Activated CD4-positive, alpha-beta T cell treated with anti-CD3 and anti-CD28 coated beads for 36 hours (primary cell): ENCODE measurements at regions of chr7 and their contacts with region 1.

Region 1: GRCh38 chr7:114021136-114021847 is 102.5 kb upstream of the PPP1R3A start:
- DNase-seq: no peak
- ATAC-seq: no peak
- H3K4me3 Mint-ChIP-seq: no peak overlapping the region
- H3K27ac Mint-ChIP-seq: no peak overlapping the region
- H3K4me1 Mint-ChIP-seq: no peaks in the 10 kb centered on the region
- H3K27me3 Mint-ChIP-seq: peaks cover 2% of the 10 kb centered on the region

Region 2: DNA sequence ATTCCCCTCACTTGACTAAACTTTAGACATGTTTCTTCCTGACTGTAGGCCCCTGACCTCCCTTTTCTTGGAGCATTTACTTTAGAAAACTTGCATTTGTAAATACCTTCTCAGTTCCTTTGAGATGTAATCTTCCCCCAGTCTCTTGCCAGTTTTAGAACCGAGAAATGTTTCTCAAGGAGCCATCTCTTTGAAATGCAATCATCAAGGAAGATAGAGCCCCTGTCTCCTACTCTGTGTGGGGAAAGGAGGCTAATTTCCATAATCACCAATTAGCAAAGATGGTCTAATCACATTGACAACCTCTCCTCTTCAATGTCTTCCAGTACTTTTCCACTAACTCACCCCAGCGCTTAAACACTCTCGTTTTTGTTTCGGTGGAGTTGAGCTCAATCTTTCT is 832.9 kb before region 1 on chr7:
- CTCF ChIA-PET with region 1: no interaction called
- POLR2A ChIA-PET with region 1: no interaction called
- intact Hi-C with region 1: no loop called
- DNase-seq: no peak
- ATAC-seq: no peak
- H3K4me3 Mint-ChIP-seq: no peak overlapping the region
- H3K27ac Mint-ChIP-seq: no peak overlapping the region
- H3K4me1 Mint-ChIP-seq: no peaks in the 10 kb centered on the region
- H3K27me3 Mint-ChIP-seq: peaks cover 9% of the 10 kb centered on the region

Region 3: DNA sequence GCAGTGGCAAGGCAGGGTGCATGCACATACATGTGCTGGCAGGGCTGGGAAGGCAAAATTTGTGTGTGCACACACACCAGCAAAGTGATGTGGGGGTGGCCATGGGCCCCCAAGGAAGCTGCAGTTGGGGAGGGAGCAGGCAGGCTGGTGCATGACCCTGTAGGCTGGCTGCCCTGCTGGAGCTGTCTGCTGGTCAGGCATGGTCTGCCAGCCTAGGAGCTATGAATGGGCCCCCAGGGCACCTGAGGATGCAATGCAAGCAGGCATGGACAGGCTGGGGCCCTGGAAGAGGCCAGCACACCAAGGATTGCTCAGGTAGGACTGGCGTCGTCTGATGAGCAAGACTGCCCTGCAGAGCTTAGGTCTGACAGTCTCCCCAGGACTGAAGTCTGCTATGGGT is 84.3 kb before region 1 on chr7:
- CTCF ChIA-PET with region 1: no interaction called
- POLR2A ChIA-PET with region 1: no interaction called
- intact Hi-C with region 1: no loop called
- DNase-seq: no peak
- ATAC-seq: no peak
- H3K4me3 Mint-ChIP-seq: no peak overlapping the region
- H3K27ac Mint-ChIP-seq: no peak overlapping the region
- H3K4me1 Mint-ChIP-seq: no peaks in the 10 kb centered on the region
- H3K27me3 Mint-ChIP-seq: no peaks in the 10 kb centered on the region

Region 4: DNA sequence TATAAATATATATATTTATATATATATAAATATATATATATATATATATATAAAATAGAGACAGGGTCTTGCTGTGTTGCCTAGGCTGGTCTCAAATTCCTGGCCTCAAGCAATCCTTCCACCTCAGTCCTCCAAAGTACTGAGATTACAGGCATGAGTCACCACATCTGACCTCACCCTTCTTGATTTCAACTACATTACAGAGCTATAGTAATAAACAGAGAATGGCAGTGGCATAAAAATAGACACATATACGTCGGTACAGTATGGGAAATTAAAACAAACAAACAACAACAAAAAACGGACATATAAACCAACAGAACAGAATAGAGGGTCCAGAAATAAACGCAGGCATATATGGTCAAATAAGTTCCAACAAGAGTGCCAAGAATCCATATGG is 24.9 kb before region 1 on chr7:
- CTCF ChIA-PET with region 1: no interaction called
- POLR2A ChIA-PET with region 1: no interaction called
- intact Hi-C with region 1: no loop called
- DNase-seq: no peak
- ATAC-seq: no peak
- H3K4me3 Mint-ChIP-seq: no peak overlapping the region
- H3K27ac Mint-ChIP-seq: no peak overlapping the region
- H3K4me1 Mint-ChIP-seq: no peaks in the 10 kb centered on the region
- H3K27me3 Mint-ChIP-seq: no peaks in the 10 kb centered on the region

Region 5: DNA sequence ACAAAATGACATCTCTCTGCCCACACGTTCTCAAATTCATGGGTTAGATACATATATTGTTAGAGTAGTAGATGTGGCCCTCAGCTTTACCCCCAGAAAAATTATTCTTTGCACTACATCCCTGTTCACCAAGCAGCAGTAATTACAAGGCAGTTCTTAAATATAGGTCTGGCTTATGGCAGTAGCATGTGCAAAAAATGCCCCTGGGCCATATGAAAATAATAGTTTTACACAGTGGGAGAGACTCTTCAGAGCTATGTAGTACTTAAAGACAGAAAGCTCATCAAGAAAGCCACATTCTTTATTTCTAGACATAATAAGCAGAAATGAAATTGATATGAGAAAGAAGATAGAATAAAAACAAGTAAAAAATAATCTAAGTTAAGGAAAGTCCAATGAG is 197.0 kb after region 1 on chr7:
- CTCF ChIA-PET with region 1: no interaction called
- POLR2A ChIA-PET with region 1: no interaction called
- intact Hi-C with region 1: no loop called
- DNase-seq: no peak
- ATAC-seq: no peak
- H3K4me3 Mint-ChIP-seq: no peak overlapping the region
- H3K27ac Mint-ChIP-seq: no peak overlapping the region
- H3K4me1 Mint-ChIP-seq: no peaks in the 10 kb centered on the region
- H3K27me3 Mint-ChIP-seq: no peaks in the 10 kb centered on the region

Region 6: GRCh38 chr7:115851291-115851690 is 1830.0 kb after region 1 on chr7:
- CTCF ChIA-PET with region 1: interaction called, 3 read pairs
- POLR2A ChIA-PET with region 1: no interaction called
- intact Hi-C with region 1: loop called in 1 of 2 experiments (anchors 5 kb)
- DNase-seq: no peak
- ATAC-seq: no peak
- H3K4me3 Mint-ChIP-seq: no peak overlapping the region
- H3K27ac Mint-ChIP-seq: no peak overlapping the region
- H3K4me1 Mint-ChIP-seq: no peaks in the 10 kb centered on the region
- H3K27me3 Mint-ChIP-seq: peaks cover 2% of the 10 kb centered on the region